IMR-90 (cell line): ENCODE measurements at regions of chr6 and their contacts with region 1.

Region 1: DNA sequence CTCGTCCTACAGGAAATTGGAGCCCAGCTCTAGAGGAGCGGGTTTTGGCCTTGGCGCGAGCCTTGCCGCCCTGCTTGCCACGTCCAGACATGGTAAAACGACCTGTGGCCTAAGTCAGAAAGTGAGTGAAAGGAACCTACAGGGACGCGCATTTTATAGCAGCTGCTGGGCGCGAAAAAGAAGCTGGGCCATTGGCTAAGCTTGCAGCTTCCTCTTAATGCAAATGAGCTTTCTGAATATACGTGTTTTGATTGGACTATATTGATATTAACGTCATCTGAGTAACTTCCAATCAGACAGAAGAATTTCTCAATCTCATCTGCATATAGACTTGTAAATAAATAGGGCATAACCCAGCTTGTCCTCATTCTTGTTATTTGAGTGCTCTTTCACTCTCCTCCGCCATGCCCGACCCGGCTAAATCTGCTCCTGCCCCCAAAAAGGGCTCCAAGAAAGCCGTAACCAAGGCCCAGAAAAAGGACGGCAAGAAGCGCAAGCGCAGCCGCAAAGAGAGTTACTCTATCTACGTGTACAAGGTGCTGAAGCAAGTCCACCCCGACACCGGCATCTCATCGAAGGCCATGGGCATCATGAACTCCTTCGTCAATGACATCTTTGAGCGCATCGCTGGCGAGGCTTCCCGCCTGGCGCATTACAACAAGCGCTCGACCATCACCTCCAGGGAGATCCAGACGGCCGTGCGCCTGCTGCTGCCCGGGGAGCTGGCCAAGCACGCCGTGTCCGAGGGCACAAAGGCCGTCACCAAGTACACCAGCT is 18.9 kb downstream of the OR2B2 start:
- DNase-seq: peak; percentile 99
- ATAC-seq: peak; percentile 64
- H3K4me3 ChIP-seq: peak overlapping the region; percentile 67
- H3K27ac ChIP-seq: peak overlapping the region; percentile 48
- H3K4me1 ChIP-seq: peaks cover 5% of the 10 kb centered on the region
- H3K27me3 ChIP-seq: no peaks in the 10 kb centered on the region
- CTCF ChIP-seq: no peak
- POLR2A ChIP-seq: peak; percentile 99
- RAD21 ChIP-seq: no peak

Region 2: GRCh38 chr6:27132532-27133280 is 760.5 kb before region 1 on chr6:
- CTCF ChIA-PET with region 1: no interaction called
- POLR2A ChIA-PET with region 1: interaction called, 12 read pairs
- dilution Hi-C with region 1: loop called (anchors 25 kb)
- in situ Hi-C with region 1: no loop called
- intact Hi-C with region 1: loop called (anchors 1 kb)
- DNase-seq: peak; percentile 100
- ATAC-seq: peak; percentile 89
- H3K4me3 ChIP-seq: peak overlapping the region; percentile 50
- H3K27ac ChIP-seq: peak overlapping the region; percentile 79
- H3K4me1 ChIP-seq: no peaks in the 10 kb centered on the region
- H3K27me3 ChIP-seq: no peaks in the 10 kb centered on the region
- CTCF ChIP-seq: no peak
- POLR2A ChIP-seq: peak; percentile 99
- RAD21 ChIP-seq: no peak

Region 3: DNA sequence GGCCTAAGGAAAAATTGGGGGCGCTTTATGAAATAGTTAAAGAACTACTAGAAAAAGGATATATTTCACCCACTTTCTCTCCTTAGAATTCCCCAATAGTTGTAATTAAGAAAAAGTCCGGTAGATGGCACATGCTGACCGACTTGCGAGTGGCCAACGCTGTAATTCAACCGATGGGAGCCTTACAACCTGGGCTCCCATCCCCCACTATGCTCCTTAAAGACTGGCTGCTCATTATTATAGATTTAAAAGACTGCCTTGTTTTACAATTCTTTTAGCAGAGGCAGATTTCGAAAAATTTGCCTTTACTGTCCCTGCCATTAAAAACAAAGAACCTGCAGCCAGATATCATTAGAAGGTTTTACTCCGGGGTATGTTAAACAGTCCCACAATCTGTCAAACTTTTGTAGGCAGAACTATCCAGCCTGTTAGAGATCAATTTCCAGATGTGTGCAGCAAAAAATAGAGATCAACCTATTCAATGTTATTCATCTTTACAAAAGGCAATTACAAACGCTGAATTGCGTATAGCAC is 704.3 kb before region 1 on chr6:
- CTCF ChIA-PET with region 1: no interaction called
- POLR2A ChIA-PET with region 1: no interaction called
- dilution Hi-C with region 1: no loop called
- in situ Hi-C with region 1: no loop called
- intact Hi-C with region 1: loop called (anchors 1 kb)
- DNase-seq: peak; percentile 83
- ATAC-seq: peak; percentile 88
- H3K4me3 ChIP-seq: peak overlapping the region; percentile 66
- H3K27ac ChIP-seq: peak overlapping the region; percentile 88
- H3K4me1 ChIP-seq: peaks cover 1% of the 10 kb centered on the region; the same call in 1 of the 2 replicates
- H3K27me3 ChIP-seq: no peaks in the 10 kb centered on the region
- CTCF ChIP-seq: peak; percentile 78
- POLR2A ChIP-seq: no peak
- RAD21 ChIP-seq: peak; percentile 83

Region 4: DNA sequence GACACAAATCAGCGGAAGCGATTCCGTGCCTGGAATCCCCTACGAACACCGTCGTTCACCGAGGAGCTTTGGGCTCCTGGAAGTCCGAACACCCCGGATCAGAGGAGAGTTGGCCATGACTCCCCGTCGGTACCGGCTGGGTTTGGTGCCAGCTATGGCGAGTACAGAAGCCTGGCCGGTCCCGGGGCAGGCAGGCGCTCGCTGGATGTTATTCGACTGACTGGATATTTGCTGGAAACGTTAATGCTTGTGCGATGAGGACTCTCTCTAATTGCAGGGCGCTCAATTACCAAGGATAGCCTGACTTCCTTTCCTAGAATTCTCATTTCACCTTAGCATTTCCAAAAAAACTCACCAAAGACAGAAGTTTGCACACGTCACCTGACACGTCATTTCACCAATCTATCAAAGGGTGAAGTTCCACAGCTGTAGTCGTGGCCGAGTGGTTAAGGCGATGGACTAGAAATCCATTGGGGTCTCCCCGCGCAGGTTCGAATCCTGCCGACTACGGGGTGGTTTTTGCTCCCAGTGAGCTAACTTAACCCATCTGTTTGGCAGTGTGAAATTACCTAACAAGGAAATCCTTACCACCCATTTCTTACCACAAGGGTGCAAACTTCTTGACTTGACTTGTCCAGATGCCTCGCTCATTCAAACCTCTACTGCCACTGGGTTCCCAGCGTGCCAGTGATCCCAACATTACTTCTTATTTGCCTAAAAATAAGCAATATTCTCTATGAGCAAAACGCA is 397.7 kb before region 1 on chr6:
- CTCF ChIA-PET with region 1: no interaction called
- POLR2A ChIA-PET with region 1: no interaction called
- dilution Hi-C with region 1: no loop called
- in situ Hi-C with region 1: no loop called
- intact Hi-C with region 1: no loop called
- DNase-seq: peak; percentile 91
- ATAC-seq: peak; percentile 94
- H3K4me3 ChIP-seq: peak overlapping the region; percentile 71
- H3K27ac ChIP-seq: peak overlapping the region; percentile 19; the same call in 1 of the 2 replicates
- H3K4me1 ChIP-seq: no peaks in the 10 kb centered on the region
- H3K27me3 ChIP-seq: no peaks in the 10 kb centered on the region
- CTCF ChIP-seq: peak; percentile 42
- POLR2A ChIP-seq: no peak
- RAD21 ChIP-seq: no peak

Region 5: DNA sequence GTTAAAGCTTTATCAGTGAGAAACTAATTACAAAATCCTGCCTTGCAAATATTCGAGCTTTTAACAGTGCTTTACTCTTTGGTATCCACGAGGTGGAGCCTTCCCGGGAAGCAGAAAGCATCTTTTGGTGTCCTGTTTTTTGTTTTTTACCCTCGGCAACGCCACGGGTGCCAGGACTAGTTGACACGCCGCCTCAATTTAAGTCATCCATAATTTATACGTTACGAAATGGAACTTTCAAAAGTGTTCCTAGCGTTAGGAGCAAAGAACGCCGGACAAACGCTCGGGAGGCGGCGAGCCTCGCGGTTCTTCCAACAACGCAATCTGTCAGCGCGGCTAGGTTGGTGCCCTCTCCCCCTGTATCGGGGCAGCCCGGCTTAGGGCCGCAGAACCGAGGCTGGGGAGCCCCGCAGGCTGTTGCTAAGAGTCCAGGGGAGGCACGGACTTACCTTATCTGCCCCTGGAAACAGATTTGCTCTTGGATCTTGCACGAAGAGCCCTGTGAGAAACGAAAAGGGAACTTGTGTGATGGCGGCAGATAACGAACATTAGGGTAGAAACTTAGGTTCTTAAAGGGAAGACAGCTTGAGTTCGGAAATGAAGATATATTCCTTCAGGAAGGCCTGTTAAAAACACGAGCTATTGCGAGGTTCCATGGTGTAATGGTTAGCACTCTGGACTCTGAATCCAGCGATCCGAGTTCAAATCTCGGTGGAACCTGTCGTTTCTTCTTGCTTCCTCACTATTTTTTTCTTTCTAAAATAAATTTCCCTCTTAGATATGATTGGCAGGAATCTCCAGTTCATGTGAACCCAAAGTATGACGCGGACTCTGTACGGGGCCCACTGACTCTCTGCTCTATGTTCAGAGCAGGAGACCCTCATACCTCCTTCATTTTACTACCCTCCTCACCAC is 374.1 kb before region 1 on chr6:
- CTCF ChIA-PET with region 1: no interaction called
- POLR2A ChIA-PET with region 1: no interaction called
- dilution Hi-C with region 1: no loop called
- in situ Hi-C with region 1: no loop called
- intact Hi-C with region 1: loop called (anchors 1 kb)
- DNase-seq: peak; percentile 90
- ATAC-seq: peak; percentile 87
- H3K4me3 ChIP-seq: peak overlapping the region; percentile 74
- H3K27ac ChIP-seq: peak overlapping the region; percentile 76
- H3K4me1 ChIP-seq: peaks cover 2% of the 10 kb centered on the region; the same call in 1 of the 2 replicates
- H3K27me3 ChIP-seq: peaks cover 2% of the 10 kb centered on the region
- CTCF ChIP-seq: peak; percentile 72
- POLR2A ChIP-seq: no peak
- RAD21 ChIP-seq: peak; percentile 55

Region 6: DNA sequence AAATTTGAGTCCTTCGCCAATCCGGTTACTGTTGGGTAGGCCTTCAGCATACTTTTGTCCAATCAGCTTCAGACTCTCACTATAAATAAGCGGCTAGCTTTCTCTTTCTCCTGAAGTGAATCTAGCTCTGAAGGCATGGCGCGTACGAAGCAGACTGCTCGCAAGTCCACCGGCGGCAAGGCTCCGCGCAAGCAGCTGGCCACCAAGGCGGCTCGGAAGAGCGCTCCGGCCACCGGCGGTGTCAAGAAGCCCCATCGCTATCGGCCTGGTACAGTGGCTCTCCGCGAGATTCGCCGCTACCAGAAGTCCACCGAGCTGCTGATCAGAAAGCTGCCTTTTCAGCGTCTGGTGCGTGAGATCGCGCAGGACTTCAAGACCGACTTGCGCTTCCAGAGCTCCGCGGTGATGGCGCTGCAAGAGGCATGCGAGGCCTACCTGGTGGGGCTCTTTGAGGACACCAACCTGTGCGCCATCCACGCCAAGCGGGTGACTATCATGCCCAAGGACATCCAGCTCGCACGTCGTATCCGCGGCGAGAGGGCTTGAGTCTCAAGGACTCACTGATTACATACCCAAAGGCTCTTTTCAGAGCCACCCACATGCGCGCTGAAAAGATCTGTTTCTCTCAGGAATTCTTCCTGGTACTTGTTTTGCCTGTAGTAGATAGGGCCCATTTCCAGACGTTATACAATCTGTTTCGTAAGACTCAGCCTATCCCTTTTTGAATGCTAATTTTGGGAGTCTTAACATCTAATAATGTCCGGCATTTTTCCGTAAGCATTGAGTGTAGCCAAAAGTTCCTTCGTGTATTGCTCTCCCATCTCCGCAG is 83.1 kb before region 1 on chr6:
- CTCF ChIA-PET with region 1: interaction called, 11 read pairs
- POLR2A ChIA-PET with region 1: interaction called, 14 read pairs
- dilution Hi-C with region 1: no loop called
- in situ Hi-C with region 1: loop called (anchors 5 kb)
- intact Hi-C with region 1: no loop called
- DNase-seq: peak; percentile 98
- ATAC-seq: peak; percentile 52
- H3K4me3 ChIP-seq: peak overlapping the region; percentile 58
- H3K27ac ChIP-seq: peak overlapping the region; percentile 87
- H3K4me1 ChIP-seq: peaks cover 3% of the 10 kb centered on the region
- H3K27me3 ChIP-seq: no peaks in the 10 kb centered on the region
- CTCF ChIP-seq: 0 out of 2 replicates have a peak, but pooled peaks have one; percentile 16
- POLR2A ChIP-seq: peak; percentile 99
- RAD21 ChIP-seq: no peak

Region 7: DNA sequence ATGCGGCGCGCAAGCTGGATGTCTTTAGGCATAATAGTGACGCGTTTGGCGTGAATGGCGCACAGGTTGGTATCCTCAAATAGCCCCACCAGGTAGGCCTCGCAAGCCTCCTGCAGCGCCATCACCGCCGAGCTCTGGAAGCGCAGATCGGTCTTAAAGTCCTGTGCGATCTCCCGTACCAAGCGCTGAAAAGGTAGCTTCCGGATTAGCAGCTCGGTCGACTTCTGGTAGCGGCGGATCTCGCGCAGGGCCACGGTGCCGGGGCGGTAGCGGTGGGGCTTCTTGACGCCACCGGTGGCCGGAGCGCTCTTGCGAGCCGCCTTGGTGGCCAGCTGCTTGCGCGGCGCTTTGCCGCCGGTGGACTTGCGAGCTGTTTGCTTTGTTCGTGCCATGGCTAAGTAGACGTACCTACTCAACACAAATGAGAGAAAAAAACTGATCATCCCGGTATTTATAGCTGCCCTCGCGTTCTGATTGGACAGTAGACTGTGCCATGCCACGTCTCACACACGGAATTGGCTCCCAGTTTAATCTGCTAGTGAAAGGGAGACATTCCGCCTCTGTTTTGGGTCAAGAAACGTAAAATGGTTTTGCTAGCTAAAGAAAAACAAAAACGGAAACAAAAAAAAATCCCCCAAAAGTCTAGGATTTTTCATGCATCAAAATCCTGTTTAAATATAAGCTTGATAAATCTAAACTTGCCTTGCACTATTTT is 21.2 kb before region 1 on chr6:
- CTCF ChIA-PET with region 1: interaction called, 3 read pairs
- POLR2A ChIA-PET with region 1: interaction called, 13 read pairs
- dilution Hi-C with region 1: no loop called
- in situ Hi-C with region 1: no loop called
- intact Hi-C with region 1: loop called (anchors 2 kb)
- DNase-seq: peak; percentile 97
- ATAC-seq: peak; percentile 76
- H3K4me3 ChIP-seq: peak overlapping the region; percentile 79
- H3K27ac ChIP-seq: peak overlapping the region; percentile 95
- H3K4me1 ChIP-seq: no peaks in the 10 kb centered on the region
- H3K27me3 ChIP-seq: no peaks in the 10 kb centered on the region
- CTCF ChIP-seq: peak; percentile 24; the same call in 1 of the 2 replicates
- POLR2A ChIP-seq: peak; percentile 99
- RAD21 ChIP-seq: no peak